Head of caudate nucleus (tissue), 42 donors: ENCODE measurements at regions of chr20 and their contacts with region 1.

Region 1: GRCh38 chr20:57654363-57654997 is 34.3 kb upstream of the ZBP1 start:
- DNase-seq: peak in 38 of 42 donors; percentile 39 to 85 (median 67)

Region 2: GRCh38 chr20:57317789-57318371 is 336.6 kb before region 1 on chr20:
- intact Hi-C with region 1: no loop called
- DNase-seq: peak in 1 of 42 donors; percentile 5

Region 3: GRCh38 chr20:57707849-57708693 is 53.6 kb after region 1 on chr20:
- intact Hi-C with region 1: loop called (anchors 2 kb)
- DNase-seq: peak in 6 of 42 donors; percentile 45 to 67 (median 52)

Region 4: DNA sequence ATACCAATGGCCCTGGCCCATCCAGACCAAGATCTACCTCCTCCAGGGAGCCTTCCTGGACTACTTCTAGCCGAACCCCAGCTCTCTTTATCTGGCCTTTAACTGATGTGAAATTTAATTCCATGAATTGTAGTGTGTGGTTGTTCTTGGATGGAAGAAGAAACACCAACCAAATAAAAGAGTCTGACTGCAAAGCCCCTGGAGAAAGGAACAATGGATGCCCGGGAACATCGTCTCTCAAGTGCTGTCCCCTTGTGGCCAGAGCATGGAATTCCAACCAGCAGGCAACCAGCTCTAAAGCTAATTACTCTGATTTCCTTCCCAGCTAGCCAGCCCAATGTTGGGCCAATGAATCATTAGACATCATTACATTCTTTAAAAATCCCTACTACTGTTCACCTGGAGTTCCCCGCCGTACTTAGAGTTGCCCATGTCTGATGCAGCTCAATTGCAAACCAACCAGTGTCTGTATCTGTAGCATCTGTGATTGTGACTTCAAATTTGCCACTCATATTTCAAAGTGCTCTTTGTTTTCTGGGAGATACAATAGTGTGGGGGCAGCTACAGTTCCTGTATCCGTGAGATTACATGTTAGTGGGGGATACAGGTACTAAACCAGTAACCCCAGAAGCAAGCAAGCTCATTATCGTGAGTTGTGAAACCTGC is 432.8 kb after region 1 on chr20:
- intact Hi-C with region 1: loop called (anchors 5 kb)
- DNase-seq: peak in 39 of 42 donors; percentile 15 to 79 (median 54)

Region 5: GRCh38 chr20:58179432-58180099 is 525.1 kb after region 1 on chr20:
- intact Hi-C with region 1: loop called (anchors 5 kb)
- DNase-seq: peak; percentile 8 to 88 (median 72)